ENCODE measurements at regions of chr2 and their contacts with region 1.

Region 1: GRCh38 chr2:108330979-108331378 is 42.3 kb downstream of the SULT1C2 start:
- DNase-seq: no peak
- H3K4me3 ChIP-seq: no peak overlapping the region
- H3K27ac ChIP-seq: no peak overlapping the region
- H3K4me1 ChIP-seq: no peaks in the 10 kb centered on the region
- H3K27me3 ChIP-seq: no peaks in the 10 kb centered on the region
- CTCF ChIP-seq: no peak
- EP300 ChIP-seq: no peak
- POLR2A ChIP-seq: no peak

Region 2: GRCh38 chr2:108285616-108286015 is 45.4 kb before region 1 on chr2:
- in situ Hi-C with region 1: no loop called
- intact Hi-C with region 1: loop called (anchors 2 kb)
- DNase-seq: no peak
- H3K4me3 ChIP-seq: no peak overlapping the region
- H3K27ac ChIP-seq: no peak overlapping the region
- H3K4me1 ChIP-seq: peaks cover 0 to 5% (median 0%) of the 10 kb centered on the region in 4 donors
- H3K27me3 ChIP-seq: no peaks in the 10 kb centered on the region
- CTCF ChIP-seq: no peak
- EP300 ChIP-seq: no peak
- POLR2A ChIP-seq: no peak

Region 3: GRCh38 chr2:108786354-108787199 is 455.6 kb after region 1 on chr2 and contains the start of gene CCDC138:
- in situ Hi-C with region 1: no loop called
- intact Hi-C with region 1: no loop called
- DNase-seq: peak; percentile 93
- H3K4me3 ChIP-seq: peak within 1 kb of the TSS; percentile 49 to 78 (median 68)
- H3K27ac ChIP-seq: peak within 1 kb of the TSS; percentile 69 to 90 (median 84)
- H3K4me1 ChIP-seq: peaks cover 0 to 16% (median 11%) of the 10 kb centered on the region in 4 donors
- H3K27me3 ChIP-seq: no peaks in the 10 kb centered on the region
- CTCF ChIP-seq: no peak
- EP300 ChIP-seq: no peak
- POLR2A ChIP-seq: peak; percentile 56
- total RNA-seq, gene CCDC138: 3.7 to 5.5 (median 4.4) TPM in 3 of 4 donors, not detected in the other

Measured in transverse colon (tissue), 4 donors.